ENCODE measurements at regions of chr4 and their contacts with region 1.

Region 1: GRCh38 chr4:27908356-27908755 is 1047.7 kb downstream of the STIM2 start:
- DNase-seq: no peak
- H3K4me3 ChIP-seq: no peak overlapping the region
- H3K27ac ChIP-seq: no peak overlapping the region
- H3K4me1 ChIP-seq: no peaks in the 10 kb centered on the region
- H3K27me3 ChIP-seq: no peaks in the 10 kb centered on the region
- CTCF ChIP-seq: no peak
- POLR2A ChIP-seq: no peak

Region 2: GRCh38 chr4:27100719-27101515 is 807.4 kb before region 1 on chr4:
- intact Hi-C with region 1: loop called (anchors 5 kb)
- DNase-seq: no peak
- H3K4me3 ChIP-seq: no peak overlapping the region
- H3K27ac ChIP-seq: no peak overlapping the region
- H3K4me1 ChIP-seq: no peaks in the 10 kb centered on the region
- H3K27me3 ChIP-seq: peaks cover 0 to 10% of the 10 kb centered on the region in 2 donors
- CTCF ChIP-seq: no peak
- POLR2A ChIP-seq: no peak